PC-9 (cell line): ENCODE measurements at regions of chr1 and their contacts with region 1.

Region 1: GRCh38 chr1:234772345-234773147 is 162.6 kb upstream of the IRF2BP2 start:
- DNase-seq: peak; percentile 95 to 99
- H3K4me3 ChIP-seq: peak overlapping the region; percentile 35; the same call in 1 of the 2 replicates
- H3K27ac ChIP-seq: peak overlapping the region; percentile 95
- H3K4me1 ChIP-seq: peaks cover 22% of the 10 kb centered on the region
- H3K27me3 ChIP-seq: no peaks in the 10 kb centered on the region
- CTCF ChIP-seq: no peak

Region 2: DNA sequence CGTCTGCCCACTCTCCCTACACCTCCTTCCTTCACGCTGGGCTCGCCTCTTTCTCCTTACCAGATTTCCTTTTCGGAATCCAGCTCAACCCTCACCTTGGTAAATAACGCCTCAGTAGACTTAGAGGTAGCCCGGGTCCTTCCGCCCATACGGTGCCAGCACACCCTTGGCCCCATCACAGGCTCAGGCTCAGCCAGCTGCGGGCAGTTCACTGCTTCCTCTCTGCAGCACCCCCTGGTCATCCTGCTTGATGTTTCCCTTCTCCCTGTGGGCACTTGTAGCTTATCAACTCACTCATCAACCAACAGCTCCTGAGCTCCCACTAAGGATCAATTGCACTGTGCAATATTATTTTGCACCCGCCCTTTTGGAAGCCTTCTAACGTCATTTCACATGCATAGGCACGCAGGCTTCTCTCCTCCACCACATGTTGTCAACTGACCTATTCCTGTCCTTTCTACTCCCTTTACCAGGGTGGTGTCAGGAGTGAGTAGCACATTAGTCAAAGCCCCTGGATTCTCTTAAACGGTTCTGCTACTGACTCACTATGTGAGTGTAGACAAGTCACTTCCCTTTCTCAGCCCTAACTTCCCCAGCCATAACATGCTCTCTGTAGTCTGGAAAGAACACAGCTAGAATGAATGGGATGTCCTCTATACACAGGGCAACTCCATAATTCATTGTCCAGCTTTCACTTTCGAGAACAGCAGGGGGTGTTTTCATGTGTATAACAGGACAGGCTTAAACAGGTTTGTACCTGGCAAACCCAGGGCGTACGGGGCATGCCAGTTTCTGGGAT is 115.5 kb before region 1 on chr1:
- CTCF ChIA-PET with region 1: interaction called, 4 read pairs
- POLR2A ChIA-PET with region 1: no interaction called
- intact Hi-C with region 1: loop called (anchors 1 kb)
- DNase-seq: peak; percentile 50 to 95
- H3K4me3 ChIP-seq: peak overlapping the region; percentile 69
- H3K27ac ChIP-seq: peak overlapping the region; percentile 99
- H3K4me1 ChIP-seq: peaks cover 59% of the 10 kb centered on the region
- H3K27me3 ChIP-seq: no peaks in the 10 kb centered on the region
- CTCF ChIP-seq: no peak

Region 3: DNA sequence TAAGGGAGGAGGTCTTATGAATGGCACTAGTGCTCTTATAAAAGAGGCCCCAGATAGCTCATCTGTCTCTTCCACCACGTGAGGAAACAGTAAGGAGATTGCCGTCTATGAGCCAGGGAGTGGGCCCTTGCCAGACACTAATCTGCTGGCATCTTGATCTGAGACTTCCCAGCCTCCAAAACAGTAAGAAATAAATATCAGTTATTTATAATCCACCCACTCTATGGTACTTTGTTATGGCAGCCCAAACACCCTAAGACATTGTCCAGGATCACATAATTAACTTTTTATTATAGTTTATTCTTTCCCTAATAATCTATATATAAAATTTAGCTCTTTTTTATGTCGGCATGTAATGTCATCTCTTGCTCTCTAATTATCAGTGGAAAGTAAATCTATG is 18.6 kb before region 1 on chr1:
- CTCF ChIA-PET with region 1: no interaction called
- POLR2A ChIA-PET with region 1: interaction called, 19 read pairs
- intact Hi-C with region 1: no loop called
- DNase-seq: no peak
- H3K4me3 ChIP-seq: no peak overlapping the region
- H3K27ac ChIP-seq: no peak overlapping the region
- H3K4me1 ChIP-seq: no peaks in the 10 kb centered on the region
- H3K27me3 ChIP-seq: no peaks in the 10 kb centered on the region
- CTCF ChIP-seq: no peak

Region 4: DNA sequence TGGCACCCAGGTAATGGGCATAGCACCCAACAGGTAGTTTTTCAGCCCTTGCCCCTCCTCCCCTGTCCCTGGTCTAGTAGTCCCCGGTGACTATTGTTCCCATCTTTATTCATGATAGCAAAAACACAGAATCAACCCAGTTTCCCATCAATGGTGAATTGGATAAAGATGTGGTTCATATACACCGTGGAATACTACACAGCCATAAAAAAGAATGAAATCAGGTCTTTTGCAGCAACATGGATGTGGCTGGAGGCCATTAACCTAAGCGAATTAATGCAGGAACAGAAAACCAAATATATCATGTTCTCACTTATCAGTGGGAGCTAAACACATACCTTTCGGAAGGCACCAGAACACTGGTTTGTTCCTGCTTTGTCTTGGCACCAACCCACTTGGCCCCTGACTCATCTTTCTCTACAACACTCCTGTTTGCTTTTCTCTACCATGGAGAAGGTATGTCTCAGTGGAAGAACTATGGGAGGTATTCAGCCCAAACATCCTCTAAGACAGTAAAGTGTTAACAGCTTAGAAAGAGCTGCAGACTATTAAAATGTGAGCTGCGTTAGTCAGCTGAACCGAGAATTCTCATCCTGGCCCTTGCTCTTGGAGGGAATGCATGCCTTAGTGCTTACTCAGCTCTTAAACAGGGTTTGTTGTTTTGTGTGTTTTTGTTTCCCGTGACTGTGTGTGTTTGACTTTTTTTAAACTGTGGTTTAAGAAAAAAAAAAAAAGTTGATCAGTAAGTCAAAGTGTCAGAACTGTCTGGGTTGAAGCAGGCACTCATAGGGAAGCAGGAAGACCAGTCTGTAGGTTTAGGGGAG is 153.1 kb after region 1 on chr1:
- CTCF ChIA-PET with region 1: no interaction called
- POLR2A ChIA-PET with region 1: no interaction called
- intact Hi-C with region 1: loop called (anchors 5 kb)
- DNase-seq: peak; percentile 74 to 99
- H3K4me3 ChIP-seq: no peak overlapping the region
- H3K27ac ChIP-seq: peak overlapping the region; percentile 88
- H3K4me1 ChIP-seq: peaks cover 37% of the 10 kb centered on the region
- H3K27me3 ChIP-seq: no peaks in the 10 kb centered on the region
- CTCF ChIP-seq: no peak

Region 5: GRCh38 chr1:234987415-234988154 is 215.0 kb after region 1 on chr1:
- CTCF ChIA-PET with region 1: no interaction called
- POLR2A ChIA-PET with region 1: no interaction called
- intact Hi-C with region 1: loop called (anchors 1 kb)
- DNase-seq: peak; percentile 88
- H3K4me3 ChIP-seq: no peak overlapping the region
- H3K27ac ChIP-seq: peak overlapping the region; percentile 96
- H3K4me1 ChIP-seq: peaks cover 66% of the 10 kb centered on the region
- H3K27me3 ChIP-seq: no peaks in the 10 kb centered on the region
- CTCF ChIP-seq: no peak